A549 (cell line): ENCODE measurements at regions of chr2 and their contacts with region 1.

Region 1: GRCh38 chr2:102020596-102021181 is 28.9 kb downstream of the IL1R2 start:
- DNase-seq: peak; percentile 53 to 87
- ATAC-seq: peak; percentile 98
- H3K4me3 ChIP-seq: no peak overlapping the region
- H3K27ac ChIP-seq: peak overlapping the region; percentile 85 to 87
- H3K4me1 ChIP-seq: peaks cover 39% of the 10 kb centered on the region
- CTCF ChIP-seq: peak; percentile 95
- EP300 ChIP-seq: no peak
- POLR2A ChIP-seq: no peak
- RAD21 ChIP-seq: peak; percentile 99

Region 2: DNA sequence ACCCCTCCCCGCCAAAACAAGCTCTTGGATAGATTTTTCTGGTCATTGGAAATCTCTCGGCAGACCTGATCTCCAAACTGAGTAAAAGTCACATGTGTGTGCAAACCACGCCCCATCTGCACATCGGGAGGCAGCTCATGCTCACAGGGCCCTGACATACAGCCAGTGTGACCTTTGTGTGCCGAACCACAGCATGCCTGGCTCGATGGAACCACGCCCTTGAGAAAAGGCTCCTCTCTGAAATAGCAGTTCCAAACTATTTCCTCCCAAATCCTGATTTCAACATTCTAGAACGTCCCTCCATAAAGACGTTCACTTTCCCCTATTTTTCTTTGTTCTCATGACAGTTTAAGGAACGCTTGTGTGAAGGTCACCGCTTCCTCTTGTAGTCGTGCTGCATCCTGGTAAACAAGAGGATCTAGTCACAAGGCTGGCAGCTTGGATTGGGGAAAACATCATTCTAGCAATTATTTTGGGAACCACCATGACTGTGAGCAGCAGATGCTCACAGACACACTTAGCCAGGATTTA is 382.4 kb before region 1 on chr2:
- CTCF ChIA-PET with region 1: no interaction called
- POLR2A ChIA-PET with region 1: no interaction called
- DNase-seq: no peak
- ATAC-seq: no peak
- H3K4me3 ChIP-seq: no peak overlapping the region
- H3K27ac ChIP-seq: no peak overlapping the region
- H3K4me1 ChIP-seq: no peaks in the 10 kb centered on the region
- CTCF ChIP-seq: no peak
- EP300 ChIP-seq: no peak
- POLR2A ChIP-seq: no peak
- RAD21 ChIP-seq: no peak

Region 3: DNA sequence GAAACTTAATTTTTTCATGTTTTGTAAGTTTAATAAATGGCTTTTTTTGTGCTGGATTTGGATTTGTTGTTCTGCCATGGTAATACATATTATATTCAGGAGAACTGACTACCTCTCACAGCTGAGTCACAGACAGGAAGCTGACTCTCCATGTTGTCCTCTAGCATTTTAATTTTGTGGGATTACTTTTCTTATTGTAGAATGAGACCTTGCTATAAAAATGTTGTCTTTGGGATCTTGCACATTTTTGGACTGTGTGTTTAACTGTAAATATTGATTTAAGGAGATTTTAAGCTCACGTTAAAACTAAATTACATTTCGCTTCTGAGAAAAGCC is 274.3 kb before region 1 on chr2:
- CTCF ChIA-PET with region 1: no interaction called
- POLR2A ChIA-PET with region 1: no interaction called
- DNase-seq: no peak
- ATAC-seq: peak in 1 of 2 experiments; percentile 60; a peak in 2 of 6 replicates
- H3K4me3 ChIP-seq: no peak overlapping the region
- H3K27ac ChIP-seq: peak overlapping the region; percentile 78 to 84
- H3K4me1 ChIP-seq: peaks cover 70% of the 10 kb centered on the region
- CTCF ChIP-seq: no peak
- EP300 ChIP-seq: no peak
- POLR2A ChIP-seq: no peak
- RAD21 ChIP-seq: no peak

Region 4: DNA sequence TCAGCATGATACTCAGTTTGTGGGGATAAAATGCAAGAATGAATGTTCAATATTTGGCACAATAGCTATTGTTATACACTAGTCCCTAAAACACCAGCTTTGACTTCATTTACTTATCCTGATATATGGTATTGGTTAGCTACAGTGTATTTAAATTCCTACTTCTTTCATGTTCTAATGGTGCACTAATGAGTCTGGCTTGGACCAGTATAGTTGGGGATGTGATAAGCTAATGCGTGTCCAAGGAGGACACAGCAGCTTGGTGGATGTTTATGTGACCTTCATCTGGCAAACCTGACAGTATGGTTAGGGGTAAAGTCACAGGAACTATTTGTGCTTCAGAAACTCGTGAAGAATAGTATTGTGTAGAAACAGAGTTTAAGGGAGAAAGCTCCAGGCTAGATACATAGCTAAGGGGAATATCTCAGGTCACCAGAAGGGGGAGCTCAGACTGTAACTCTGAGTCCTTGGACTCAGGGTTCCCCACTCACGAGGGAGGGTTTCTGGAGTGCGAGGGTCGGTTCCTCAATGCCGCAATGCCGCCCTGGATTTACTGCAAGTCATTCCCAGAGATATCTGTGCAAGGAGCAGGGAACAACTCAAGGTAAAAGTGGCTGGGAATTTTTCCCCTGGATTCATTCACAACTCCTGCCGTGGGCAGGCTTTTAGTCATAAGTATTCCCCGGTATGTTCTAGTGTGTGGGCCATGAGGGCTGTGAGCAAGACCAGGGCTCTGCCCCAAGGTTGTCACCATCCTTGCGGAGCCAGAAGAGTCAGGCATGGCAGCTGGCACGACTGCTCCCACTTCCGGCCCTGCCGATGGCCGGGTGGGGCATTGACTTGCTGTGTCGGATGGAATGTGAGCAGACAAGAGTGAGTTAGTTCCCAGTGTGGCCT is 14.5 kb before region 1 on chr2:
- CTCF ChIA-PET with region 1: interaction called, 26 read pairs
- POLR2A ChIA-PET with region 1: no interaction called
- DNase-seq: peak; percentile 43 to 52
- ATAC-seq: peak; percentile 86 to 98
- H3K4me3 ChIP-seq: no peak overlapping the region
- H3K27ac ChIP-seq: peak overlapping the region in 1 of 2 experiments; percentile 45; a peak in 1 of 6 replicates
- H3K4me1 ChIP-seq: peaks cover 4% of the 10 kb centered on the region; the same call in 1 of the 3 replicates
- CTCF ChIP-seq: peak; percentile 72
- EP300 ChIP-seq: no peak
- POLR2A ChIP-seq: no peak
- RAD21 ChIP-seq: peak; percentile 70 to 71

Region 5: DNA sequence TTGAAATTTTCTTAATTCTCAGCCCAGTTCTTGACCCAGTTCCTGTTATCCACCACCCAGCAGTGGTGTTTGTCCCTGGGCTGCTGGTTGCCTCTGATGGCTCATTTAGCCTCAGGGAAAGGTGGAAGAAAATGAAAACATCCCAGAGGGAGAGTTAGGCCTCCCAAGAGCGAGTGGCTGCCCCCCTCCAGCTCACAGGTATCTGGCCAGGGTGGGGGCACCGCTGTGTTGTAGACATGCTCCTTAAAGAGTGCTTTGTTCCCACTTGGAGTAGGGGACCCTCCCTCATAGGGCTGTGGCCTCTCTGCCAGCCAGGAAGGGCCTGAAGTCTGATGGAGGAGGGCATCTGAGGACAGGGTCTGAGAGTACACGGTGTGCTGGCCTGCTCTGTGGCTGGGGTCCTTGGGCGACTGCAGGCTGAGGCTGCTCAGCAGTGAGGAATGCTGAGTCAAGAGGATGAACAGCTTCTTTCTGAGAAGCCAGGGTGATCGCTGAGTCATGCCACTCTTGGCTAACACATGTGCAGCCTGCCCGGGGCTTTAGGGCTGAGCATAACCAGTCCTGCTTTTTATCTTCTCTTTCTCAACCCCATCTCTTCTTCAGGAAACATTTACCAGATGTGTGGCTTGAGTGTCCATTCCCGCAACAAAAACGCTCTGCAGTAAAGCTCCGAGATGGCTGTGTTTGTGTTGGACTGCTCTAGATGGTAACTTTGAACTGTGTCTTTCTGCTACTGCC is 43.4 kb after region 1 on chr2:
- CTCF ChIA-PET with region 1: interaction called, 11 read pairs
- POLR2A ChIA-PET with region 1: no interaction called
- DNase-seq: peak; percentile 88 to 92
- ATAC-seq: peak; percentile 81 to 86
- H3K4me3 ChIP-seq: peak overlapping the region; percentile 30; the same call in 1 of the 3 replicates
- H3K27ac ChIP-seq: peak overlapping the region; percentile 98 to 99
- H3K4me1 ChIP-seq: peaks cover 55% of the 10 kb centered on the region
- CTCF ChIP-seq: no peak
- EP300 ChIP-seq: peak in 1 of 2 experiments; percentile 55; a peak in 2 of 5 replicates
- POLR2A ChIP-seq: no peak
- RAD21 ChIP-seq: peak; percentile 8 to 30; a peak in 1 of 5 replicates

Region 6: GRCh38 chr2:102122110-102122509 is 101.4 kb after region 1 on chr2:
- CTCF ChIA-PET with region 1: interaction called, 15 read pairs
- POLR2A ChIA-PET with region 1: no interaction called
- DNase-seq: no peak
- ATAC-seq: peak; percentile 47 to 63; a peak in 4 of 6 replicates
- H3K4me3 ChIP-seq: no peak overlapping the region
- H3K27ac ChIP-seq: peak overlapping the region; percentile 66 to 76
- H3K4me1 ChIP-seq: peaks cover 44% of the 10 kb centered on the region
- CTCF ChIP-seq: no peak
- EP300 ChIP-seq: no peak
- POLR2A ChIP-seq: no peak
- RAD21 ChIP-seq: no peak

Region 7: DNA sequence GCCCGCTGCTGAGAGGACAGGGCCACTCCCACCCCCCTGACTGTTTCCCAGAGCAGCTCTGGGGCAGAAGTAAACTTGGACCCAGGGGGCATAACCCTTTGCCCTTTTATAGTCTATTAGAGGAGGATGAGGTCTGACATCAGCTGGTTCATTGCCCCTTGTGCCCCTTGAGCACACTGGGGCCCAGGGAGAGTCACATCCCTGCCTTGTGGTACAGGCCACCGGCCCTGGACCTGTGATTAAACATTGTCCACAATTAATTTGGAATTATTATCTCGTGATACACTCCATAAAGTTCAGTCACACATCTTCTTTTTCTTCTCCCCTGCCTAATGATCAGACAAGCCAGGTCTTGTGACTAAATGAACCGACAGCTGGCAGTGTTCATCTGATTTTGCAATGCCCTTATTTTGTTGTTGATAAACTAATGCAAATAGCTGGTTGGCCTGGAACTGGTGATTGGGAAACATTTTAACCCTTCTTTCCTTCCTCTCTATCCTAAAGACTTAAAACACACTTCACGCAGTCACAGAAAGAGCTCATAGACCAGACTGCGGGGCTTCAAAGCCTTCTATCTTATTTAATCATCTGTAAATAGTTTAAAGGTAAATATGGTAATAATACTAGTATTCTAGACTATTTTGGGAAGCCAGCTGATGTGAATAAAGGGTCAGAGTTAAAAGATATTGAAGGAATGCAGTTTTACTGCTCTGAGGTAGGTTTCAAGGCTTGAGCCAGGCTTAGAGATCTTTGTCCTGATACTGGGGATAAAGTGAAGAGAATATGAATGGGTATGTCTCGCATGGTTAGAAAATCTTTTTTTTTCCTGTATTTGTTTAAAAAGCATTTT is 135.2 kb after region 1 on chr2:
- CTCF ChIA-PET with region 1: interaction called, 11 read pairs
- POLR2A ChIA-PET with region 1: no interaction called
- DNase-seq: no peak
- ATAC-seq: no peak
- H3K4me3 ChIP-seq: no peak overlapping the region
- H3K27ac ChIP-seq: peak overlapping the region; percentile 29 to 53; a peak in 4 of 6 replicates
- H3K4me1 ChIP-seq: peaks cover 11% of the 10 kb centered on the region; the same call in 2 of the 3 replicates
- CTCF ChIP-seq: no peak
- EP300 ChIP-seq: no peak
- POLR2A ChIP-seq: no peak
- RAD21 ChIP-seq: no peak

Region 8: GRCh38 chr2:102251042-102251848 is 230.6 kb after region 1 on chr2:
- CTCF ChIA-PET with region 1: interaction called, 17 read pairs
- POLR2A ChIA-PET with region 1: no interaction called
- DNase-seq: peak; percentile 43 to 68
- ATAC-seq: peak; percentile 82 to 93
- H3K4me3 ChIP-seq: peak overlapping the region; percentile 50
- H3K27ac ChIP-seq: peak overlapping the region; percentile 61 to 79; a peak in 5 of 6 replicates
- H3K4me1 ChIP-seq: no peaks in the 10 kb centered on the region
- CTCF ChIP-seq: peak; percentile 72
- EP300 ChIP-seq: no peak
- POLR2A ChIP-seq: no peak
- RAD21 ChIP-seq: peak; percentile 47 to 49

Region 9: DNA sequence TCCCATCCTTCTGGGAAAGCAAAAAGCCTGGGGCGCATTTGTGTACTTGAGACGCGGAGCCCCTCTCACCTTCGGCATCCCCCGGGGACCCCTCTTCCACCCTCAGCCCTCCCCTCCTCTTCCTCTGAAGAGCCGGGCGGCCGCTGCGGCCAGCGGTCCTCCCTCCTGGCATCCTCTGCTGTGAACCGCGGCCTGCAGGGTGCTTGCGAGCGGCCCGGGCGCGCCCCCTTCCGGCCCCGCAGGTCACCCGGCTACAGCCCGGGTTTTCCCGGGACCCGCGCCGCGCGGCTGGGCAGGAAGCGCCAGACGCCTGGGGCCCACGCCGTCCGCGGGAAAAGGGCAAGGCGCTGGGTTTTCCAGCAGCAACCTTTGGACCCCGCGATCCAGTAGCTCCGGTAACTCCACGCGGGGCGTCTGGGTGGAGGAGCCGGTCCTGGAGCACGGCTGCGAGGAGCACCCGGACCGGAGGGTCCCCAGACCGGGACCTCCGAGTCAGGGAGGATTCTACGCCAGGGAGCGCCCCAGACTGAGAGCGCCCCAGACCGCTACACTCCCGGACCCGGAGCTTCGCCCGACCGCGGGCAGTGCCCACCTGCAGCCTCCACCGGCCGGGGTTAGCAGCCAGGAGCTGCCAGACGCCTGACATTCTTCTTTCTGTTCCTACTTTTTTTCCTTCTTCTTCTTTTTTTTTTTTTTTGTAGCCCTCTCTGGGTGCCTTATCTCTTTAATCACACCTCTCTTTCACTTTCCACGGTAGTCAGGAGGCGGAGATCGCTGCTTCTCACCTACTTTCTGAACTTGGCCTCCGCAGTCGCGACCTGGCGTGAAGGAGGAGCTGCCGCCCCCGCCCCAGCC is 335.1 kb after region 1 on chr2 and contains the start of gene IL18R1:
- CTCF ChIA-PET with region 1: interaction called, 11 read pairs
- POLR2A ChIA-PET with region 1: no interaction called
- DNase-seq: peak; percentile 58 to 73
- ATAC-seq: peak; percentile 100
- H3K4me3 ChIP-seq: peak within 1 kb of the TSS; percentile 57
- H3K27ac ChIP-seq: peak within 1 kb of the TSS; percentile 76 to 94
- H3K4me1 ChIP-seq: no peaks in the 10 kb centered on the region
- CTCF ChIP-seq: peak; percentile 86
- EP300 ChIP-seq: no peak
- POLR2A ChIP-seq: no peak
- RAD21 ChIP-seq: peak; percentile 76 to 90
- polyA plus RNA-seq, gene IL18R1: 2.6 and 3.5 TPM in 2 replicates